CD8-positive, alpha-beta T cell (primary cell): ENCODE measurements at regions of chr19 and their contacts with region 1.

Region 1: GRCh38 chr19:45187421-45188100 is 9.0 kb downstream of the BLOC1S3 start:
- DNase-seq: peak in 6 of 9 experiments; percentile 25 to 74 (median 46)
- ATAC-seq: peak; percentile 97
- H3K4me3 ChIP-seq: peak overlapping the region in 1 of 2 experiments; percentile 39
- H3K4me3 Mint-ChIP-seq: no peak overlapping the region
- H3K27ac ChIP-seq: no peak overlapping the region
- H3K27ac Mint-ChIP-seq: no peak overlapping the region
- H3K4me1 ChIP-seq: peaks cover 5% of the 10 kb centered on the region
- H3K4me1 Mint-ChIP-seq: peaks cover 8% of the 10 kb centered on the region
- H3K27me3 ChIP-seq: no peaks in the 10 kb centered on the region
- H3K27me3 Mint-ChIP-seq: no peaks in the 10 kb centered on the region
- CTCF ChIP-seq: peak; percentile 73

Region 2: GRCh38 chr19:44903602-44904425 is 283.7 kb before region 1 on chr19:
- CTCF ChIA-PET with region 1: interaction called, 3 read pairs
- POLR2A ChIA-PET with region 1: no interaction called
- intact Hi-C with region 1: loop called in 1 of 2 experiments (anchors 5 kb)
- DNase-seq: peak; percentile 55 to 85 (median 71)
- ATAC-seq: peak; percentile 73
- H3K4me3 ChIP-seq: no peak overlapping the region
- H3K4me3 Mint-ChIP-seq: no peak overlapping the region
- H3K27ac ChIP-seq: no peak overlapping the region
- H3K27ac Mint-ChIP-seq: no peak overlapping the region
- H3K4me1 ChIP-seq: peaks cover 12% of the 10 kb centered on the region
- H3K4me1 Mint-ChIP-seq: peaks cover 12% of the 10 kb centered on the region
- H3K27me3 ChIP-seq: peaks cover 7 to 25% of the 10 kb centered on the region in 2 experiments
- H3K27me3 Mint-ChIP-seq: peaks cover 23% of the 10 kb centered on the region
- CTCF ChIP-seq: peak; percentile 94

Region 3: DNA sequence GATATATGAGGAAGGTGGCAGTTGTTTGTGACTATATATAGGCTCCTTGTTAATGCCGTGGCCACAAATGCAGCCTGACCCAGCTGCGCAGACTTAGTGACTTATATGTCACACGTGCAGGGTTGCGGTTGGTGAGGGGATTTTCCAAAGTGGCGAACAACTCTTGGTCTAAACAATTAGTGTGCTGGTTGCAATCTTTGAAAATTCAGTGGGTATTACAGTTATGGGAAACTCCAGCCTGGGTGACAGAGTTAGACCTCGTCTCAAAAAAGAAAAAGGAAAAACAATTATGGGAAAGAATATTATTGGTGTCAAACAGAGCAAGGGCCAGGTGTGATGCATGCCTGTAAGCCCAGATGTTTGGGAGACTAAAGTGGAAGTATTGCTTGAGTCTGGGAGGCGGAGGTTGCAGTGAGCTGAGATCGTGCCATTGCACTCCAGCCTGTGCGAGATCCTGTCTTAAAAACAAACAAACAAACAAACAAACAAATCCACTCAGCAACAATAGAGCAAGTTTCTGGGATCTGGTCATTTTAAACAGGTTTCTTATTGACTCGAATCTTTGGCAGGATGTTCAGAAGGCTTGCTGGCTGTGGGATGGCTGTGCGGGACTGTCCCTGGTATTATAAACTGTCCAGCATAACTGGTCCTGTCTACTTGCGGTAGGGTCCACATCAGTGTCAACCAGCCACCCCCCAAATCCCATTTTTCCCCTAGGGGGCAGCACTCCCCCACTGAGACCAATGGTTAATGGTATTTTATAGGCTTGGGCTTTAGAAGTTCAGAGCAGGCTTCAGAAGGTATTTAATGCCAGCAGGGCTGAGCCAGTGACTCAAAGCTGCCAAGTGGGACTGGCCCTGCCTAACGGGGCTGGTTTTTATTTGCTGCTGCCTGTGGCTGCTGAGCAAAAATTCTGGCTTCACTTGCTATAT is 170.9 kb before region 1 on chr19:
- CTCF ChIA-PET with region 1: interaction called, 7 read pairs
- POLR2A ChIA-PET with region 1: no interaction called
- intact Hi-C with region 1: loop called in 1 of 2 experiments (anchors 2 kb)
- DNase-seq: peak; percentile 54 to 95 (median 73)
- ATAC-seq: peak; percentile 85
- H3K4me3 ChIP-seq: peak overlapping the region in 1 of 2 experiments; percentile 9
- H3K4me3 Mint-ChIP-seq: peak overlapping the region; percentile 42
- H3K27ac ChIP-seq: peak overlapping the region; percentile 44 to 82
- H3K27ac Mint-ChIP-seq: peak overlapping the region; percentile 87
- H3K4me1 ChIP-seq: peaks cover 3% of the 10 kb centered on the region
- H3K4me1 Mint-ChIP-seq: peaks cover 13% of the 10 kb centered on the region
- H3K27me3 ChIP-seq: no peaks in the 10 kb centered on the region
- H3K27me3 Mint-ChIP-seq: no peaks in the 10 kb centered on the region
- CTCF ChIP-seq: peak; percentile 68

Region 4: GRCh38 chr19:45152504-45153338 is 34.8 kb before region 1 on chr19:
- CTCF ChIA-PET with region 1: no interaction called
- POLR2A ChIA-PET with region 1: no interaction called
- intact Hi-C with region 1: loop called in 1 of 2 experiments (anchors 5 kb)
- DNase-seq: peak in 8 of 9 experiments; percentile 14 to 76 (median 50)
- ATAC-seq: peak; percentile 66
- H3K4me3 ChIP-seq: peak overlapping the region; percentile 45 to 60
- H3K4me3 Mint-ChIP-seq: peak overlapping the region; percentile 80
- H3K27ac ChIP-seq: no peak overlapping the region
- H3K27ac Mint-ChIP-seq: no peak overlapping the region
- H3K4me1 ChIP-seq: peaks cover 25% of the 10 kb centered on the region
- H3K4me1 Mint-ChIP-seq: peaks cover 17% of the 10 kb centered on the region
- H3K27me3 ChIP-seq: peaks cover 0 to 2% of the 10 kb centered on the region in 2 experiments
- H3K27me3 Mint-ChIP-seq: peaks cover 13% of the 10 kb centered on the region
- CTCF ChIP-seq: no peak

Region 5: DNA sequence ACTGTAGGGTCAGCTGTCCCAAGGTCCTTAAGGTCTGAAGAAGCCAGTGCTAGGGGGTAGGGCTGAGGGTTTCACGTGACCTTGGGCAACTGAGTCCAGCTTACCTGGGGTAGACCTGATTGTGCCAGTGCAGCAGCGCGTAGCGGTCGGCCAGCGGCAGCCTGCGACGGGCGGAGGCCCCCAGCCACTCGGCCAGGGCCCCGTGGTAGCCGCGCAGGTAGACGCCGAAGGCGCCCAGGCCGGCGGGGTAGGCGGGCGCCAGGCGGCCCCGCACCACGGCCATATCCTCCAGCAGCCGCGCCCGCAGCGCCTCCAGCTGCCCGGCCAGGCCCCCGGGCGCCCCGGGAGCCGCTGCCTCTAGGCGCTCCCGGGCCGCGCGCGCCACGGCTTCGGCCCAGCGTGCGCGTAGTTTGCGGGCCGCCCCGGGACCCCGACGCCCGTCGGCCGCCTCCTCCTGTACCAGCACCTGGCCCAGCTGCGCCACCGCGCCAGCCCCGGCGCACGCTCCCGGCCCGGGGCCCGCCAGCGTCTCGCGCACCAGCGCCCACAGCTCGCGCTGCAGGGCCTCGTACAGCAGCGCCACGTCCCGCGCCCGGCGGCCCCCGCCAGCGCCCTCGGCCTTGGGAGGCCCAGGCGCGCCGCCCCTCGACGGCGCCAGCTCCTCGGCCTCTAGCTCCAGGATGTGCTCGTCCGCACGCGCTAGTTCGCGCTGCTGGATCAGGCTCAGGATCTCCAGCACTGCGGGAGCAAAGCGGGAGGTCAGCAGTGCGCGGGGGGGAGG is 46.7 kb after region 1 on chr19:
- CTCF ChIA-PET with region 1: no interaction called
- POLR2A ChIA-PET with region 1: no interaction called
- intact Hi-C with region 1: no loop called
- DNase-seq: no peak
- ATAC-seq: no peak
- H3K4me3 ChIP-seq: no peak overlapping the region
- H3K4me3 Mint-ChIP-seq: no peak overlapping the region
- H3K27ac ChIP-seq: no peak overlapping the region
- H3K27ac Mint-ChIP-seq: no peak overlapping the region
- H3K4me1 ChIP-seq: no peaks in the 10 kb centered on the region
- H3K4me1 Mint-ChIP-seq: peaks cover 3% of the 10 kb centered on the region
- H3K27me3 ChIP-seq: peaks cover 0 to 3% of the 10 kb centered on the region in 2 experiments
- H3K27me3 Mint-ChIP-seq: peaks cover 44% of the 10 kb centered on the region
- CTCF ChIP-seq: no peak